ENCODE measurements at regions of chr9 and their contacts with region 1.

Region 1: GRCh38 chr9:7570107-7570720 is 229.4 kb downstream of the DMAC1 start:
- DNase-seq: peak; percentile 18 to 76 (median 63)
- ATAC-seq: peak; percentile 84
- H3K4me3 ChIP-seq: no peak overlapping the region
- H3K4me3 Mint-ChIP-seq: no peak overlapping the region
- H3K27ac ChIP-seq: no peak overlapping the region
- H3K27ac Mint-ChIP-seq: peak overlapping the region in 1 of 9 donors; percentile 26
- H3K4me1 ChIP-seq: no peaks in the 10 kb centered on the region
- H3K4me1 Mint-ChIP-seq: peaks cover 0 to 5% (median 0%) of the 10 kb centered on the region in 7 donors
- H3K27me3 ChIP-seq: no peaks in the 10 kb centered on the region
- H3K27me3 Mint-ChIP-seq: peaks cover 0 to 28% (median 3%) of the 10 kb centered on the region in 5 donors

Region 2: DNA sequence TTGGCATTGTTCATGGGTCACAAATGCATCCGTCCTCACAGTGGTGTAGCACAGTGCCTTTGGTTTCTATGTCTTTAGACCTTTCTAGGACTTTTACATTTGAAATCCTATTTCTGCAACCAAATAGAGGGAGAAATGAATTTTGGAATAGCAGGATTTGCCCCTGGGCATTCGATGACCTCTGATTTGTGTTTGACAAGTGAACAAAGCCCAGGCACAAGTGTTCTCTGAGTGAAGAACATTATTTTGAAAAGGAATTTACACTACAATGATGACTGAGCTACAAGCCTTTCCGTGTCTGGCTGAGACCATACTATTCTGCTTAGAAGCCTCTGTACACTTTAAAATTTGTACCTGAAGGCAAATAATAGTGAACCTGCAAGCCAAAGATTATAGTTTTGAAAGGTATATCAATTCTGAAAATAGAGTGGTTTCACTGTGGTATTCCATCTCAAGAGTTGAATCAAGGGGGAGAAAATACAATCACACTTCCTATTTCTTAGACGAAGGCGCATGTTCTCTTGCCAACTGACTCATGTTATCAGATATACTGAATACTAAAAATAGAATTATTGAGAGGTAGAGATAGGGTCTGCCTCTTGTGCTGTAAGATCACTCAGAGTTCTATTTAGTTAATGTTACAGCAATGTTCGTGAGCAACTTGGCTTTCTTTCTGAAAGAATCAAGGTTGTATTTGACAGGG is 514.9 kb before region 1 on chr9:
- CTCF ChIA-PET with region 1: no interaction called
- POLR2A ChIA-PET with region 1: no interaction called
- intact Hi-C with region 1: loop called in 1 of 2 experiments (anchors 1 kb)
- DNase-seq: no peak
- ATAC-seq: no peak
- H3K4me3 ChIP-seq: no peak overlapping the region
- H3K4me3 Mint-ChIP-seq: no peak overlapping the region
- H3K27ac ChIP-seq: no peak overlapping the region
- H3K27ac Mint-ChIP-seq: peak overlapping the region in 1 of 9 donors; percentile 30
- H3K4me1 ChIP-seq: no peaks in the 10 kb centered on the region
- H3K4me1 Mint-ChIP-seq: peaks cover 0 to 7% (median 5%) of the 10 kb centered on the region in 7 donors
- H3K27me3 ChIP-seq: no peaks in the 10 kb centered on the region
- H3K27me3 Mint-ChIP-seq: no peaks in the 10 kb centered on the region

Region 3: DNA sequence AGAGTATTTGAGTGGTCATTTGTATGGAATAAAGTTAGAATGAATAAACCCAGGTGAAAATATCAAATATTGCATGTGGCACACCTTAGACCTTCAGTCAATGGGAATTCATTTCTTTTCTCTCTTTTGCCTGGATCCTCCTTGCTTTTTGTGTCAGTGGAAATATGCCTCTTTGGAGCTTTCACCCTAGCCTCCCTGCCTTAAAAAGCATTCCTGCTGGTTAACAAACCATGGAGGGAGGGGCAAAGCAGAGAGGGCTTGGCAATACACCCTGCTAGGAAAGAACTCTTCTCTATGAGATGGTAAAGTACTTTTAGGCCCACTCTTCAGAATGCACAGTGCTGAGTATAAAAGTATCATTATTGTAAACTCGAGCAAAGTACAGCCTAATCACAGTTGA is 154.4 kb before region 1 on chr9:
- CTCF ChIA-PET with region 1: no interaction called
- POLR2A ChIA-PET with region 1: no interaction called
- intact Hi-C with region 1: no loop called
- DNase-seq: no peak
- ATAC-seq: no peak
- H3K4me3 ChIP-seq: no peak overlapping the region
- H3K4me3 Mint-ChIP-seq: no peak overlapping the region
- H3K27ac ChIP-seq: no peak overlapping the region
- H3K27ac Mint-ChIP-seq: no peak overlapping the region
- H3K4me1 ChIP-seq: no peaks in the 10 kb centered on the region
- H3K4me1 Mint-ChIP-seq: no peaks in the 10 kb centered on the region
- H3K27me3 ChIP-seq: no peaks in the 10 kb centered on the region
- H3K27me3 Mint-ChIP-seq: peaks cover 1 to 15% (median 11%) of the 10 kb centered on the region in 5 donors

Region 4: GRCh38 chr9:7656636-7657035 is 86.4 kb after region 1 on chr9:
- CTCF ChIA-PET with region 1: interaction called, 5 read pairs
- POLR2A ChIA-PET with region 1: no interaction called
- intact Hi-C with region 1: loop called (anchors 1 kb)
- DNase-seq: no peak
- ATAC-seq: no peak
- H3K4me3 ChIP-seq: no peak overlapping the region
- H3K4me3 Mint-ChIP-seq: no peak overlapping the region
- H3K27ac ChIP-seq: no peak overlapping the region
- H3K27ac Mint-ChIP-seq: no peak overlapping the region
- H3K4me1 ChIP-seq: no peaks in the 10 kb centered on the region
- H3K4me1 Mint-ChIP-seq: peaks cover 0 to 26% (median 10%) of the 10 kb centered on the region in 7 donors
- H3K27me3 ChIP-seq: no peaks in the 10 kb centered on the region
- H3K27me3 Mint-ChIP-seq: no peaks in the 10 kb centered on the region

Region 5: DNA sequence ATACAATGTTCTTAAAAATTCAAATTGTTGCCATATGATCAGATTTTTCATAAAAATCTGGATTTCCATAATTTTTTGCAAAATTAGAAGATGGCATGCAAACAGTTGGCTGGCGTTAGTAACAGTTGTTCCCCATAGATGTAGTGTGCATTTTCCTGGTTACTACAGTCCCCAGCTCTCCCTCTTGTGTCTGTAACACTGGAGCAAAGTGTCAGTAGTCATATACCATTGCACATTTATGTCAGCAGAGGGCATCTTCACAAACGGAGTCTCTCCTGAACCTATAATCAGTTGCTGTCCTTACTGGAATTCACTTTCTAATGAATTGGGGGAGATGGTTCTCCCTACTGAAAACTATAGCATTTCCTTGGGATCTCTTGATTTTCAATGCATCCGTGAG is 274.0 kb after region 1 on chr9:
- CTCF ChIA-PET with region 1: no interaction called
- POLR2A ChIA-PET with region 1: no interaction called
- intact Hi-C with region 1: loop called (anchors 1 to 5 kb)
- DNase-seq: peak in 6 of 9 donors; percentile 2 to 44 (median 24)
- ATAC-seq: peak; percentile 73
- H3K4me3 ChIP-seq: no peak overlapping the region
- H3K4me3 Mint-ChIP-seq: peak overlapping the region in 1 of 10 donors; percentile 6
- H3K27ac ChIP-seq: no peak overlapping the region
- H3K27ac Mint-ChIP-seq: no peak overlapping the region
- H3K4me1 ChIP-seq: no peaks in the 10 kb centered on the region
- H3K4me1 Mint-ChIP-seq: peaks cover 0 to 3% (median 0%) of the 10 kb centered on the region in 7 donors
- H3K27me3 ChIP-seq: no peaks in the 10 kb centered on the region
- H3K27me3 Mint-ChIP-seq: peaks cover 0 to 4% (median 0%) of the 10 kb centered on the region in 5 donors

Region 6: GRCh38 chr9:8053530-8053929 is 483.3 kb after region 1 on chr9:
- CTCF ChIA-PET with region 1: interaction called, 4 read pairs
- POLR2A ChIA-PET with region 1: no interaction called
- intact Hi-C with region 1: loop called in 1 of 2 experiments (anchors 1 kb)
- DNase-seq: no peak
- ATAC-seq: no peak
- H3K4me3 ChIP-seq: no peak overlapping the region
- H3K4me3 Mint-ChIP-seq: no peak overlapping the region
- H3K27ac ChIP-seq: no peak overlapping the region
- H3K27ac Mint-ChIP-seq: no peak overlapping the region
- H3K4me1 ChIP-seq: no peaks in the 10 kb centered on the region
- H3K4me1 Mint-ChIP-seq: peaks cover 0 to 5% (median 0%) of the 10 kb centered on the region in 7 donors
- H3K27me3 ChIP-seq: no peaks in the 10 kb centered on the region
- H3K27me3 Mint-ChIP-seq: no peaks in the 10 kb centered on the region

Region 7: DNA sequence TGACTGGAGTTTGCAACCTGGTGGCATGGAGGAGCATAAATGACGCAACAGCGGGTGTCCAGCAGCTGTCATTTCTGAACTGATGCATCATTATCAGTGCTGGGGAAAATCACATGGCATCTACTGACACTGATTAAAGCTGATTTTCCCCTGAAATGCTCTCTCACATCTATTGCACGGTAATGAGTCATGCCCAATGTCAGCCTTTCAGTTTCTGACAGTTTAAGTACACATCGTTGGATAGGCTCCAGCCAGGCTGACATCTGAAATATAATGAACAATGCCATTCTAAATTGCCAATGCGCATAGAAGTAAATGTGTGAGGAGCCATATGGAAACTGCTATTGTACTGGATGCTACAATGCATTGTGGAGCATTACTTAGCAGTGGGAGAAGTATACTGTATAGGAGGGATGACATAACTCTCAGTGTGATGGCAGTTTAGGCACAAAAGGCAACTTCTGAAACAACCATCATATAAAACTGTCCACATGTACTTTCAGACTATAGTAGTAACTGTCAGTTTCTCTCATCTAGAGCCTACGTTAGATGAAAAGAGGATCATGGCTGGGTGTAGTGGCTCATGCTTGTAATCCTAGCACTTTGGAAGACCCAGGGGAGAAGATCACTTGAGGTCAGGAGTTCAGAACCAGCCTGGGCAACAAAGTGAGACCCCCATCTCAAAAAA is 618.6 kb after region 1 on chr9:
- CTCF ChIA-PET with region 1: no interaction called
- POLR2A ChIA-PET with region 1: no interaction called
- intact Hi-C with region 1: loop called in 1 of 2 experiments (anchors 10 kb)
- DNase-seq: no peak
- ATAC-seq: no peak
- H3K4me3 ChIP-seq: no peak overlapping the region
- H3K4me3 Mint-ChIP-seq: no peak overlapping the region
- H3K27ac ChIP-seq: no peak overlapping the region
- H3K27ac Mint-ChIP-seq: no peak overlapping the region
- H3K4me1 ChIP-seq: no peaks in the 10 kb centered on the region
- H3K4me1 Mint-ChIP-seq: no peaks in the 10 kb centered on the region
- H3K27me3 ChIP-seq: no peaks in the 10 kb centered on the region
- H3K27me3 Mint-ChIP-seq: peaks cover 0 to 29% (median 6%) of the 10 kb centered on the region in 5 donors

Measured in naive thymus-derived CD4-positive, alpha-beta T cell (primary cell).